B cell (primary cell): ENCODE measurements at regions of chr15 and their contacts with region 1.

Region 1: GRCh38 chr15:57732526-57733331 is 26.2 kb downstream of the POLR2M start:
- DNase-seq: peak; percentile 54
- ATAC-seq: peak; percentile 47
- H3K4me3 ChIP-seq: no peak overlapping the region
- H3K4me3 Mint-ChIP-seq: no peak overlapping the region
- H3K27ac ChIP-seq: no peak overlapping the region
- H3K27ac Mint-ChIP-seq: no peak overlapping the region
- H3K4me1 ChIP-seq: no peaks in the 10 kb centered on the region
- H3K4me1 Mint-ChIP-seq: no peaks in the 10 kb centered on the region
- H3K27me3 ChIP-seq: no peaks in the 10 kb centered on the region
- H3K27me3 Mint-ChIP-seq: no peaks in the 10 kb centered on the region
- CTCF ChIP-seq: peak; percentile 99

Region 2: DNA sequence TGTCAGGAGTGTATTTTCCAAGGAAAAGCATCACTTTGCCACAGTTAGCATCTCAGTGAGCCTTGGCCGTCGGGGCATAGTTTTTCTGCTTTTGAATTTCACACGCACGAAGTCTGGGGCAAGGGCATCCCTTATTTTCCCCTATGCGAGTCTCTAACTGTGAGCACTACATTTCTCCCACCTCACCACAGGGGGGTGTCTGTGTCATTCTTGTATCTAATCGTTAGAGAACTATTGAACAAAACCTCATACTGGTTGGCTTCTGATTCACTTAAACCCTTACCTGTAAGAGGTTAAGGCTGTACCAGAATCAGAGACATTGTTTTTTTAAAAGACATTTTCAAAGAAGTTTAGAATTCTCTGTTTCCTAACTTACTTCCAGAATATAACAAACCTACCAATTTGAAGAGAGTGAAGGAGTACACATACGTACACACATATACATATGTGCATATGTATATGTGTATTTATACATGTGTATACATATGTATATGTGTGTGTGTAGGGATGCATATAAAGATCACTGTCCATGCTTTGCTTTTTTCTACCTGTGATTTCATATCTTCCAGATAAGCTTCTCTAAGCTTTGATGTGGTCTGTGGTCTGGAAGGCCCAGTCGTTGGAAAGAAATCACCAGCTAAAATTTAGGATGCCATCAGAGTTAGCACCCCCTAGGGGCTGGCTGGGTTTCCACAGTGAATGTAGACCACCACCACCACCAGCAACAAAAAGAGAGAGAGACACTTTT is 91.6 kb before region 1 on chr15:
- CTCF ChIA-PET with region 1: no interaction called
- POLR2A ChIA-PET with region 1: no interaction called
- intact Hi-C with region 1: no loop called
- DNase-seq: peak; percentile 27
- ATAC-seq: peak; percentile 36
- H3K4me3 ChIP-seq: no peak overlapping the region
- H3K4me3 Mint-ChIP-seq: no peak overlapping the region
- H3K27ac ChIP-seq: no peak overlapping the region
- H3K27ac Mint-ChIP-seq: peak overlapping the region; percentile 21
- H3K4me1 ChIP-seq: peaks cover 0 to 3% of the 10 kb centered on the region in 2 donors
- H3K4me1 Mint-ChIP-seq: no peaks in the 10 kb centered on the region
- H3K27me3 ChIP-seq: no peaks in the 10 kb centered on the region
- H3K27me3 Mint-ChIP-seq: peaks cover 5% of the 10 kb centered on the region
- CTCF ChIP-seq: peak; percentile 43

Region 3: GRCh38 chr15:57720867-57721266 is 11.9 kb before region 1 on chr15:
- CTCF ChIA-PET with region 1: interaction called, 10 read pairs
- POLR2A ChIA-PET with region 1: no interaction called
- intact Hi-C with region 1: no loop called
- DNase-seq: no peak
- ATAC-seq: no peak
- H3K4me3 ChIP-seq: no peak overlapping the region
- H3K4me3 Mint-ChIP-seq: no peak overlapping the region
- H3K27ac ChIP-seq: no peak overlapping the region
- H3K27ac Mint-ChIP-seq: no peak overlapping the region
- H3K4me1 ChIP-seq: no peaks in the 10 kb centered on the region
- H3K4me1 Mint-ChIP-seq: no peaks in the 10 kb centered on the region
- H3K27me3 ChIP-seq: no peaks in the 10 kb centered on the region
- H3K27me3 Mint-ChIP-seq: no peaks in the 10 kb centered on the region
- CTCF ChIP-seq: no peak